ENCODE measurements at regions of chr6 and their contacts with region 1.

Region 1: DNA sequence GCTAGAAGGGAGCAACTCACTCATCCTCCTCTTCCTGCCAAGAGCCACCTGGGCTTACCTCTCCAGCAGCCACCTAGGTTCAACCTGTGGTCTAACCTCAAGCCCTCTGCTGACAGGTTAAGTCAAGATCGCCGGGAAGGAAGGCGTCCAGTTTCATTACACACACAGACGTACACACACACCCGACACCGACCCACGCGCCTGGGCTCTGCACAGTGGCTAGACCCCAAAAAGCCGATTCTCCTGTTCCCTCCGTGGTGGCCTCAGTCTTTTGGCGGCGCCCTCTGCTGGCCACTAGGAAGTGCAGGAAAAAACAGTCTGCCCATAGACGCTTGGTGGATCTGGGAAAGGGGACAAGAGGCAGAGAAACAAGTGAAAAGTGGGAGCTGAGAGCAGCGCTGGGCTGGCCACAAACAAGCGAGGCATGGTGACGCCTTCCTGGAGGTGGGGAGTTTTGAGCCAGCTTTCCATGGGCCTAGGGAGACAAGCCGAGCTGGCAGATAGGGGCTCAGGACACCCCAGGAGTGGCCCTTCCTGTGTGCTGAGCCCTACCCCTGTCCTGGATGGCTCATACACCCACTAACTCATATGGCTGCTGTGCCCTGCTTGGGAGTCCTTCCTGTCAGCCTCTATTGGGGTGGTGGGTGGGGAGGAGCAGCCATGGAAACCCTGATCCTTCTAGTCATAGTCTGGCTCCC is 52.7 kb downstream of the MRPL14 start:
- DNase-seq: peak; percentile 83
- H3K4me3 ChIP-seq: peak overlapping the region in 1 of 2 experiments; percentile 16; a peak in 1 of 4 replicates
- H3K27ac ChIP-seq: peak overlapping the region in 1 of 2 experiments; percentile 99; a peak in 2 of 4 replicates
- H3K4me1 ChIP-seq: peaks cover 35 to 70% of the 10 kb centered on the region in 2 experiments
- H3K27me3 ChIP-seq: no peaks in the 10 kb centered on the region
- CTCF ChIP-seq: peak; percentile 91
- EP300 ChIP-seq: peak in 1 of 2 experiments; percentile 8; a peak in 1 of 4 replicates
- RAD21 ChIP-seq: peak; percentile 88

Region 2: DNA sequence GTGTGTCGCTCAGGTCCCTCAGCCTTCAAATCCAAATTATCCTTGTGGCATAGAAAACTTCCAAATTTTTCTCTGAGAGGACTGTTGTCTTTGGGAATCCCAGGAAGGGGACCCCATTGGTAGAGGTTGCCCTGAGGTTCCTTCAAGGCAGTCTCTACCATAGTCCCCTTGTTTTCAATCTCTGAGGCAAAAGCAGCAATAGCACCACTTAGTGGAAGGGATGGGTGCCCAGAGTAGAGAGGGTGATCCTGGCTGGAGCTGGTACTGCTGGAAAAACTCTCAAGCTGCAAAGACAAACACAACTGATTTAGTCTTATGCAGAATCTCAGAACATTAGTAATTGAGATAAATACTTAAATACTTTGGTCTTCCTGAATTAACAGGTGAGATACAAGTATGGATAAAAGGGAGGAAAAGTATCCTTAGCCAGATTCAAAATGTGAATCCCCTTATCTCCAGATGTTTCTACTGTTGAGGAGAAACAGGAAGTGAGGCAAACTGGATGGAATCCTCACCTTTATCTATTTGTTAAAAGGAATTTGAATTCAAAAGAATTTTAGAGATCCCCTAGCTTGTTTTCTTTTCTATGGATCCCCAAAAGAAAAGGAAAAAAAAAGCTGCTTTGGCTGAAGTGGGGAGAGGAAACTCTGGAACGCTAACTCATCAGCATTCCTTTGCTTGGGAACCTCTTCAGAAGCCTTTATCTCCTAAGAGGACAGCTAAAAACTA is 718.6 kb before region 1 on chr6:
- CTCF ChIA-PET with region 1: no interaction called
- POLR2A ChIA-PET with region 1: no interaction called
- DNase-seq: peak; percentile 16
- H3K4me3 ChIP-seq: no peak overlapping the region
- H3K27ac ChIP-seq: no peak overlapping the region
- H3K4me1 ChIP-seq: peaks cover 0 to 4% of the 10 kb centered on the region in 2 experiments; a peak in 2 of 4 replicates
- H3K27me3 ChIP-seq: no peaks in the 10 kb centered on the region
- CTCF ChIP-seq: peak; percentile 34
- EP300 ChIP-seq: no peak
- RAD21 ChIP-seq: peak; percentile 43

Region 3: GRCh38 chr6:43613721-43614393 is 460.7 kb before region 1 on chr6:
- CTCF ChIA-PET with region 1: interaction called, 22 read pairs
- POLR2A ChIA-PET with region 1: no interaction called
- DNase-seq: no peak
- H3K4me3 ChIP-seq: no peak overlapping the region
- H3K27ac ChIP-seq: no peak overlapping the region
- H3K4me1 ChIP-seq: no peaks in the 10 kb centered on the region; a peak in 1 of 4 replicates
- H3K27me3 ChIP-seq: no peaks in the 10 kb centered on the region
- CTCF ChIP-seq: no peak
- EP300 ChIP-seq: no peak
- RAD21 ChIP-seq: no peak

Region 4: DNA sequence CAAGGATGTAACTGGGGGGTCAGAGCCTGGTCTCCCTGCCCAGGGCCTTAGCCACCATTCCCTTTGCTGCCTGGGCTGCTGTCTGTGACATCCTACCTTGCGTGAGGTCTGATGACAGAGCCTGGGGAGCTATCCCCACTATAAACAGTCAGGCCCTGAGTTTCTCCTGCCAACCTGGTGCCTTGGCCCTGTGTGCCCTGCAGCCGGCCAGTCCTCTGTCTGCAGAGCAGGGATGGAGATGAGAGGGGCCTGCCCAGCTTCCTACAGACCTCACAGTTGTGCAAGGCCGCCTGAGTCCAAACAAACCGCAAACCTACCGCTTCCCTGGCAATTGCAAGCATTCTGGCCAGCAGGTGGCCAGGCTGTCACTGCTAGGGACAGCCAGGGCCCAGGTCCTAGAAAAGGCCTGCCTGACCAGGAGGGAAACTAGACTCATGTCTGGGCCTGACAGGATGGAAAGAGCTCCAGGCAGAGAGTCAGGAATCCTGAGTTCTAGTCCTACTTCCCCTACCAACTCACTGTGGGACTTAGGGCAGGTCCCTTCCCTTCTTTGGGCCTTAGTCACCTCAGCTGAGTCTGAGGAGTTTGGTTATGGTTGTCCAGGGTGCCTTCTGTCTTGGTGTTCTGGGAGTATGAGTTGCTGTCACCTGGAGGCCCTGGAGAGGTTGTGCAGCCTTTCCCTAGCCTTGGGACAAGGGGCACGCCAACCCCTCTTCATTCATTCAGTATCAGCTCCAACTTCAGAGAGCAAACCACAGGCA is 218.4 kb before region 1 on chr6:
- CTCF ChIA-PET with region 1: interaction called, 20 read pairs
- POLR2A ChIA-PET with region 1: no interaction called
- DNase-seq: peak; percentile 74
- H3K4me3 ChIP-seq: no peak overlapping the region
- H3K27ac ChIP-seq: peak overlapping the region in 1 of 2 experiments; percentile 92; a peak in 2 of 4 replicates
- H3K4me1 ChIP-seq: peaks cover 0 to 41% of the 10 kb centered on the region in 2 experiments; a peak in 1 of 4 replicates
- H3K27me3 ChIP-seq: no peaks in the 10 kb centered on the region
- CTCF ChIP-seq: peak; percentile 42
- EP300 ChIP-seq: no peak
- RAD21 ChIP-seq: peak; percentile 74

Region 5: GRCh38 chr6:43951063-43951755 is 123.4 kb before region 1 on chr6:
- CTCF ChIA-PET with region 1: interaction called, 172 read pairs
- POLR2A ChIA-PET with region 1: interaction called, 6 read pairs
- DNase-seq: peak; percentile 83
- H3K4me3 ChIP-seq: no peak overlapping the region
- H3K27ac ChIP-seq: peak overlapping the region in 1 of 2 experiments; percentile 87; a peak in 2 of 4 replicates
- H3K4me1 ChIP-seq: peaks cover 0 to 47% of the 10 kb centered on the region in 2 experiments; a peak in 1 of 4 replicates
- H3K27me3 ChIP-seq: no peaks in the 10 kb centered on the region
- CTCF ChIP-seq: peak; percentile 34
- EP300 ChIP-seq: no peak; a peak in 2 of 4 replicates
- RAD21 ChIP-seq: peak; percentile 89

Region 6: DNA sequence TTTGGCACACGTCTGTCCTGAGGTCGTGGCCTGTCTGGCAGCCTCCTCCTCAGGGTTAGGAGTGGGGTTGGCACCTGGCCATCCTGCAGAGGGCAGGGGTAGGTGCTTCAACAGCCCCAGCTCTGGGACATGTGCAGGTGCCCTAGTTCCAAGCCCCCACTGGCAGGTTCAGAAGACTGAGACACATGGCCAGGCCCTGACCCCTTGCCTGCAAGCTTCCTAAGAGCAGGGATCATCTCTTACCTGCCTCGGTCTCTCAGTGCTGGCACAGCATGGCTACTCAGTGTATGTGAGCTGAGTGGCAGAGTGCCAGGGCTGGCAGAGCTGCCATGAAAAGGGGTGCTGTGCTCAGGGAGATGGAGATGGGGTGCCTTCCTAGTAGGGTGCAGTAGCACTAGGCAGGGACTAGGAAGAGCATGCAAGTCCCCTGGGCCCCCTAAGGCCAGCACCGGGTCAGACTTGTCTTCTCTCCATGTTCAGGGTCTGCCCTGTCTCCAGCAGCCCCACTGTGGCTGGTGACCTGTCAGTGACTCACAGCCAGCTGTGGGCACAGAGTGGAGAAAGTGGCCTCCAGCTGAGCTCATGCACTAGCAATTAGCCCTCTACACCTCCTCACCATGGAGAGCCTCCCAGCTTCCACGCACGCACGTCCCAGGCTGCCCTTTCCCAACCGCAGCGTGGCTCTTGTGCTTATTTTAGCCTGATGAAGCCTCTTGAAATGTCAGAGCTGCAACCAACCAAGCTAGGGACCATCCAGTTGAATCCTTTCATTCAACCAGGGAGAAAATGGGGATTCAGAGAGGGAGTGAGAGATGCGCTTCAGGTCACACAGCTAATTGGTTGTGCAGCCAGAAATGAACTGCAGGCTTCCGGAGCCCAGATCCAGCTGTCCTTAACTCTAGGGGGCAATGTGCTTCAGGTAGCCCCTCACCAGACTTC is 63.9 kb before region 1 on chr6:
- CTCF ChIA-PET with region 1: interaction called, 27 read pairs
- POLR2A ChIA-PET with region 1: no interaction called
- DNase-seq: no peak
- H3K4me3 ChIP-seq: no peak overlapping the region
- H3K27ac ChIP-seq: peak overlapping the region; percentile 2 to 80; a peak in 3 of 4 replicates
- H3K4me1 ChIP-seq: peaks cover 23 to 33% of the 10 kb centered on the region in 2 experiments; a peak in 3 of 4 replicates
- H3K27me3 ChIP-seq: no peaks in the 10 kb centered on the region
- CTCF ChIP-seq: 0 out of 2 replicates have a peak, but pooled peaks have one; percentile 9
- EP300 ChIP-seq: no peak
- RAD21 ChIP-seq: peak; percentile 9; the same call in 1 of the 2 replicates

Region 7: GRCh38 chr6:44064089-44064947 is 10.3 kb before region 1 on chr6:
- CTCF ChIA-PET with region 1: interaction called, 203 read pairs
- POLR2A ChIA-PET with region 1: interaction called, 60 read pairs
- DNase-seq: no peak
- H3K4me3 ChIP-seq: no peak overlapping the region
- H3K27ac ChIP-seq: peak overlapping the region; percentile 0 to 73; a peak in 3 of 4 replicates
- H3K4me1 ChIP-seq: peaks cover 34 to 63% of the 10 kb centered on the region in 2 experiments; a peak in 3 of 4 replicates
- H3K27me3 ChIP-seq: no peaks in the 10 kb centered on the region
- CTCF ChIP-seq: no peak
- EP300 ChIP-seq: no peak; a peak in 1 of 4 replicates
- RAD21 ChIP-seq: no peak

Region 8: GRCh38 chr6:45911691-45912090 is 1837.1 kb after region 1 on chr6:
- CTCF ChIA-PET with region 1: no interaction called
- POLR2A ChIA-PET with region 1: no interaction called
- DNase-seq: no peak
- H3K4me3 ChIP-seq: no peak overlapping the region
- H3K27ac ChIP-seq: no peak overlapping the region
- H3K4me1 ChIP-seq: no peaks in the 10 kb centered on the region
- H3K27me3 ChIP-seq: peaks cover 17% of the 10 kb centered on the region; the same call in 1 of the 2 replicates
- CTCF ChIP-seq: no peak
- EP300 ChIP-seq: no peak
- RAD21 ChIP-seq: no peak

Measured in SK-N-SH (cell line).